ENCODE measurements at regions of chr3 and their contacts with region 1.

Region 1: DNA sequence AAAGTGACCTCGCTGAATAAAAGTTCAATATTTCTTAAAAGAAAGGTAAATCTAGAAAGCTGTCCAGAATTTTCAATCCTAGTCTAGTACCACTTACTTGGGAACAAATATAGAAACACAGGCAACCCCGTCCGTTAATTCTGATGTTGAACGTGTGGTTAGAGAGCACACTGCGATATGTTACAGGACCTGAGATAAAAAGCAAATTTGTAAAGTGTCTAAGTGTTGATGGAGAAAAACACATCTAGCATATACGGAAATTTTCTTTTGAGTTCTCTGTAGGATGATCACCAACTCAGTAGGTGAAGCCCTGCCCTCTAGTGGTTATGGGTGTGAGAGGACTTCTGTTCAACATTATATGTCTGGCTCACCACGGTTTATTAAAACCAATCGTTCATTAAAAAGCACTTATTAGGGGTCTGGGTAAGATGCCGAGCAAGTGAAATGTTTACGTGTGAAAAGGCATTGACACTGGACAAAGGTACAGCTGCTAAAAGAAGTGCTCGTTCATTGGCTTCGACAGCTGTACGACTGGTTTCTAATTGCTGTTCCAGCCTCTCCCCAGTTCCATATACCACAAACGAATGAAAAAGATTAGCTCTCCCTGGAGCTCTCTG is 1.0 kb upstream of the ATP2C1 start:
- DNase-seq: peak; percentile 91
- H3K4me3 Mint-ChIP-seq: peak overlapping the region; percentile 97
- H3K27ac Mint-ChIP-seq: peak overlapping the region; percentile 99
- H3K4me1 Mint-ChIP-seq: peaks cover 33% of the 10 kb centered on the region
- H3K27me3 Mint-ChIP-seq: no peaks in the 10 kb centered on the region

Region 2: DNA sequence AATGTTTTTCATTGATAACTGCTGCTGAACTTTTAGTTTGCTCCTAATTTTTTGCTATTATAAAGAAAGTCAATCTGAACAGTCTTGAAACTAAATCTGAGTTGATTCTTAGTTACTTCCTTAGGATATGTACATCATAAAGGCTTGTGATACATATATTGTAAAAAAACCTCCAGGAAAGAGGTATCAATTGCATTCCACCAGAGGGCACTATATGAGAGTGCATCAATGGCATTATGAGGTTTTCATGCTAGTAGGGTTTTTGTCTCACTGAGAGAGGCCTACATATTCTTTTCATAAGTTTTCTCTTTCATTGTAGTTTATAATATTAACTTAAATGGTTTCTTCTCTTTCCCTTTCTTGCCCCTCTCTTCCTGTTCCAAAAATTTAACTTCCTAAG is 193.1 kb before region 1 on chr3:
- intact Hi-C with region 1: loop called (anchors 1 kb)
- DNase-seq: peak; percentile 61
- H3K4me3 Mint-ChIP-seq: no peak overlapping the region
- H3K27ac Mint-ChIP-seq: no peak overlapping the region
- H3K4me1 Mint-ChIP-seq: peaks cover 4% of the 10 kb centered on the region
- H3K27me3 Mint-ChIP-seq: no peaks in the 10 kb centered on the region

Region 3: GRCh38 chr3:130759699-130760338 is 133.0 kb before region 1 on chr3:
- intact Hi-C with region 1: loop called (anchors 1 kb)
- DNase-seq: peak; percentile 89
- H3K4me3 Mint-ChIP-seq: no peak overlapping the region
- H3K27ac Mint-ChIP-seq: no peak overlapping the region
- H3K4me1 Mint-ChIP-seq: peaks cover 9% of the 10 kb centered on the region
- H3K27me3 Mint-ChIP-seq: peaks cover 9% of the 10 kb centered on the region

Region 4: GRCh38 chr3:130870423-130870822 is 22.4 kb before region 1 on chr3:
- intact Hi-C with region 1: no loop called
- DNase-seq: no peak
- H3K4me3 Mint-ChIP-seq: no peak overlapping the region
- H3K27ac Mint-ChIP-seq: no peak overlapping the region
- H3K4me1 Mint-ChIP-seq: no peaks in the 10 kb centered on the region
- H3K27me3 Mint-ChIP-seq: peaks cover 5% of the 10 kb centered on the region

Region 5: DNA sequence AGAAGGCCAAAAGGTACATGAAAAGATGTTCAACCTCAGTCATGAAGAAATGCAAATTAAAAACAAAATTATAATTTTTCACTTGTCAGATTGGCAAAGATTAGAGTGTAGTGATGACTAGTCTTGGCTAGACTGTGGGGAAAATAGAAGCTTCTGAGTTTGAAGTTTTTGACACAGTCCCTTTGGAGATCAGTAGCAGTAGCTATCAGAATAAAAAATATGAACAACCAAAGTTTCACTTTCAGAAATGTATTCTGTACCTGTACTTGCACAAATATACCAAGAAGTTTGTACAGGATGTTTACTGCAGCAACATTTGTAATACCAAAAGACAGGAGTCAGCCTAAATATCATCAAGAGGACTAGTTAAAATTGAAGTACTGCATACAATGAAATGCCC is 15.1 kb after region 1 on chr3:
- intact Hi-C with region 1: loop called (anchors 1 kb)
- DNase-seq: no peak
- H3K4me3 Mint-ChIP-seq: peak overlapping the region; percentile 63
- H3K27ac Mint-ChIP-seq: peak overlapping the region; percentile 78
- H3K4me1 Mint-ChIP-seq: peaks cover 44% of the 10 kb centered on the region
- H3K27me3 Mint-ChIP-seq: no peaks in the 10 kb centered on the region

Region 6: DNA sequence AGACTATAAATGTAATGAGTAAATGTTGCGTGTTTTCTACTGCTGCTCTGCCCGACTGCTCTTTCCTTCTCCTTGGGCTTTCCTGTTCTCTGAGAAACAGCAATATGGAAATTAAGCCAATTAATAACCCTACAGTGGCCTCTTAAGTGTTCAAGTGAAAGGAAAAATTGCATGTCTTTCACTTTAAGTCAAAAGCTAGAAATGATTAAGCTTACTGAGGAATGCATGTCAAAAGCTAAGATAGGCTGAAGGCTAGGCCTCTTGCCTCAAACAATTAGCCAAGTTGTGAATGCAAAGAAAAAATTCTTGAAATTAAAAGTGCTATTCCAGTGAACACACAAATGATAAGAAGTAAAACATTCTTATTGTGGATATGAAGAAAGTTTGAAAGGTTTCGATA is 56.1 kb after region 1 on chr3:
- intact Hi-C with region 1: loop called (anchors 2 kb)
- DNase-seq: no peak
- H3K4me3 Mint-ChIP-seq: no peak overlapping the region
- H3K27ac Mint-ChIP-seq: peak overlapping the region; percentile 17
- H3K4me1 Mint-ChIP-seq: peaks cover 12% of the 10 kb centered on the region
- H3K27me3 Mint-ChIP-seq: no peaks in the 10 kb centered on the region

Region 7: DNA sequence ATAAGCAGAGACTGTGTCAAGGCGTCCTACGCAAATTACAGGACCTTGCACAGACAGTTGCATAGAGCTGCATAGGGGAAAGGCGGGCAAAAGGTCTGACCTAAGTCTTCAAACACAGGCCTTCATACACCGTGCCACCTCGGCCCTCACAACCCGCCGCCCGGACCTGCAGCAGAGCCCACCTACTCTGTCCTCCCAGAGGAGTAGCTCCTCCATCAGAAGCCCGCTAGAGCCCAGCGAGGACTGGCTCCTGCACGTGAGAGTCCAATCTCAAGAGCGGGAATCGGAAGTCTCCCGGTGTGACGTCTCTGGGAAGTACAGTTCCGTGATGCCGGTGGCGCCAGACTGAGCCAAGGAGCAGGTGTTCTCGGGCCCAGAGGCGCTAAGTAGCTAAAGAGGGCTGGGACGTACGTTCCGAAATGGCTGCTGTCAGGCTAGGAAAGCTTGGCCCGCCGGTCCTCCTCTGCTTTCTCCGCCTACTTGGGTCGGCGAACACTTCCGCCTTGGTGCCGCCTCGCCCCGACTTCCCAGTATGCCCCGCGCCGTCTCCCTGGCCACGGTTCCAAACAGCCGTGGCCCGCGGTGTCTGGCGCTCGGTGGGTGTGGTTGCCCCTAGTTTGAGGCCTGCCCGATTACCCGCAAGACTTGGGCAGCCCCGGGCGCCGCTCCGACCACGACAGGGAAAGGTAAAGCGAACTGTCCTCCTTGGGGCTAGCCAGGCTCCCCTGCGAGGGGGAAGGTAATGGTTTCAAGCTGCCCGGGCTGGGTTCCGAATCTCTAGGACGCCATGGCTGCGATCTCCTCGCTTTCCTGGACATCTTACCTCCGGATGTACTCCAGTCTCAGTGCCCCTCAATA is 133.7 kb after region 1 on chr3 and contains the starts of genes ASTE1 and NEK11:
- intact Hi-C with region 1: loop called (anchors 2 kb)
- DNase-seq: peak; percentile 97
- H3K4me3 Mint-ChIP-seq: peak within 1 kb of the TSS; percentile 86
- H3K27ac Mint-ChIP-seq: peak within 1 kb of the TSS; percentile 97
- H3K4me1 Mint-ChIP-seq: peaks cover 29% of the 10 kb centered on the region
- H3K27me3 Mint-ChIP-seq: peaks cover 10% of the 10 kb centered on the region
- total RNA-seq, gene ASTE1: 8.7 and 9.5 TPM in 2 replicates
- total RNA-seq, gene NEK11: 1.1 and 1.5 TPM in 2 replicates

Region 8: GRCh38 chr3:131260525-131260924 is 367.7 kb after region 1 on chr3:
- intact Hi-C with region 1: no loop called
- DNase-seq: no peak
- H3K4me3 Mint-ChIP-seq: no peak overlapping the region
- H3K27ac Mint-ChIP-seq: no peak overlapping the region
- H3K4me1 Mint-ChIP-seq: no peaks in the 10 kb centered on the region
- H3K27me3 Mint-ChIP-seq: no peaks in the 10 kb centered on the region

Measured in activated CD4-positive, alpha-beta T cell treated with anti-CD3 and anti-CD28 coated beads, Interleukin-2, amount 10 ng/mL, durations not matched to agents 24 days and 14 days (primary cell).